ENCODE measurements at regions of chr4 and their contacts with region 1.

Region 1: DNA sequence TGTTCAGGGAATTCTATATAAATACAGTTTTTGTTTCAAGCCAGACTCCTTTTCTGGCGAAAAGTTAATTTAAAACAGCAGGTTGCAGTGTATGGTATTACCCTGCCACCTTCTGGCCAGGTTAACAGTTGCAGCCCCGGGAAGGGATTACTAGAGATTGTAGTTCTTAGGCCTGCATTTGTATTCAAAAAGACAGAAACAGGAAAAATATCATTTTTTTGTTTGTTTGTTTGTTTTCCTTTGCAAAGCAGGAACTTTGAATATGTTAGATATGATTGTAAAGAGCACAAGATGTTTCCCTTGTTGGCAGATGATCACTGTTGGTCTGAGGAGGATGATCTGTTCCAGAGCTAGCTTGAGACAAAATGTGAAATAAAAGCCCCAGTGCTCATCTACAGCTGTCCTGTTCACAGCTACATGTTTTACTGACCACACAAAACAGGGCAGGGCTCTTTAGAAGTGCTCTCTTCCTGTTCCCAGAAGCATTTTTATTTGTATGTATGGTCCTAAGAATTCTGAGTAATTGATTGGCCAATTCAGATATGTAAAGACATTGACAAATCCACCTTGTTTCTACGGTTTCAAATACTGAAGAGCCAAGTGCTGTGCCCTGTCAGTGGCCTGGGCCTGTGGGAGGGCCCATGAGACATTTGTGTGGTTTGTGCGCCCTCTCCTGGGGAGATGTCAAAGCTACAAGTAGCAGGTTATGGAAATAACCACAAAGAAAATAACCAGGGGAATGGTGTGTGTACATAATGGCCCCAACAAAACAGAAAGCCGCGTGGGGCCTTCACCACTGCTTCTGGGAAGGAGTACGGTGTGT is 57.9 kb downstream of the CLDN22 start:
- DNase-seq: peak; percentile 47 to 96 (median 86)

Region 2: GRCh38 chr4:182938205-182938645 is 323.9 kb before region 1 on chr4:
- intact Hi-C with region 1: loop called (anchors 1 kb)
- DNase-seq: peak; percentile 34 to 94 (median 72)

Region 3: GRCh38 chr4:183342541-183343533 is 80.7 kb after region 1 on chr4:
- intact Hi-C with region 1: no loop called
- DNase-seq: peak in 2 of 10 donors; percentile 76 to 86

Measured in posterior cingulate gyrus (tissue), 11 donors.